Activated CD4-positive, alpha-beta T cell treated with anti-CD3 and anti-CD28 coated beads, Interleukin-2, amount 10 ng/mL, durations not matched to agents 24 days and 14 days (primary cell): ENCODE measurements at regions of chr22 and their contacts with region 1.

Region 1: DNA sequence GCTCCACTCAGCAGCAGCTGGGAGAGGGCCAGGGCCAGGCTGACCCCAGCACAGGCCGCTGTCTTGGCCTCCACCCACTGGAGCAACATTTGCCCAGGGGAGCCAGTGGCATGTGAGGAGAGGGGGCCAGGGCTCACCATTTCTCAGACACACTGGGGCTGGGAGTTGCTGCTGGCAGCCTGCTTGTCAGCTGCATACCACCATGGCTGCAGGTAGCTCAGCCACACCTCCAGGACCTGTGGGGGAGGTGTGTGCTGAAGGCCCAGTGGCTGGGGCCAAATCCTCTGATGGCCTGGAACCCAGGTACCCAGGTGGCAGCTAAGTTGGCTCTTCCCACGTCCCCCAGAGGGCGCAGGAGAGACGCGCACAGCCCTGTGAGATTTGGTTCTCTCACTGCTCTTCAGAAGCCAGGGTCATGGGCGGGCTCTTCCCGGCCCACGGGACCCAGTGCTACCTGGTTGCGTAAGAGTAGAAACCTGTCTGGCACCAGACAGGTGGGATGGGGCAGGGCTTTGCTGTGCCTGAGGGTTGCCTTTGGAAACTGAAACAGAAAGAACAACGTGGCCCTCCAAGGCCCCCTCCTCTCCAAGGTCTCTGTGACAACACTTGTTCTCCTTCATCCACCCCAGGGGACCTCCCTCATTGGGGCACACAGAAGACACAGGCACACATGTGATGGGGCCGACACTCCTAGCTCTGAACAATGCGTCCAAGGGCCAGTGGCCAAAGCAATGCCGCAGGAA is 98.8 kb downstream of the MED15 start:
- DNase-seq: peak; percentile 89
- H3K4me3 Mint-ChIP-seq: no peak overlapping the region
- H3K27ac Mint-ChIP-seq: no peak overlapping the region
- H3K4me1 Mint-ChIP-seq: peaks cover 4% of the 10 kb centered on the region
- H3K27me3 Mint-ChIP-seq: no peaks in the 10 kb centered on the region

Region 2: DNA sequence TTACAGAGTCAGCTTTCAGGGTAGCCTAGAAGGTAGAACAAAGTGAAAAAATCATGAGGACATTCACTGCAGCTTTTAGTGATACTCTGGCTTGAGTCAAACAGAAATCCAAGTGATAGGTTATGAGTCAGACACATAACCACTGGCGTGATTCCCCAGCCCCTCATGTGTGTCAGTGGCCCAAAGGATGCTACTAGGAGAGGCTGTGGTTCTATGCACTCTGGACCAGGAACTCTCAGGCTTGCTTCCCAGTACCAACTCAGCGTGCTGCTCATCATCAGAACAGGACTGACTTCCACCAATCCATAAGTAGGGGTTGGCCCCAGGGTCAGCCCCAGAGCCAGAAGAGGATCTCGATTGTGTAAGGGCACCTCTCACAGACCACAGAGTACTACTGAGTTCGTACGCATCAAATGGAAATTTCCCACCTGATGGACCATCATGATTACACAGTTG is 18.0 kb after region 1 on chr22:
- intact Hi-C with region 1: loop called (anchors 2 kb)
- DNase-seq: peak; percentile 69
- H3K4me3 Mint-ChIP-seq: no peak overlapping the region
- H3K27ac Mint-ChIP-seq: no peak overlapping the region
- H3K4me1 Mint-ChIP-seq: peaks cover 5% of the 10 kb centered on the region
- H3K27me3 Mint-ChIP-seq: peaks cover 27% of the 10 kb centered on the region

Region 3: GRCh38 chr22:20741634-20742581 is 135.7 kb after region 1 on chr22:
- intact Hi-C with region 1: loop called (anchors 1 kb)
- DNase-seq: peak; percentile 82
- H3K4me3 Mint-ChIP-seq: no peak overlapping the region
- H3K27ac Mint-ChIP-seq: no peak overlapping the region
- H3K4me1 Mint-ChIP-seq: peaks cover 7% of the 10 kb centered on the region
- H3K27me3 Mint-ChIP-seq: no peaks in the 10 kb centered on the region